ENCODE measurements at regions of chr6 and their contacts with region 1.

Region 1: DNA sequence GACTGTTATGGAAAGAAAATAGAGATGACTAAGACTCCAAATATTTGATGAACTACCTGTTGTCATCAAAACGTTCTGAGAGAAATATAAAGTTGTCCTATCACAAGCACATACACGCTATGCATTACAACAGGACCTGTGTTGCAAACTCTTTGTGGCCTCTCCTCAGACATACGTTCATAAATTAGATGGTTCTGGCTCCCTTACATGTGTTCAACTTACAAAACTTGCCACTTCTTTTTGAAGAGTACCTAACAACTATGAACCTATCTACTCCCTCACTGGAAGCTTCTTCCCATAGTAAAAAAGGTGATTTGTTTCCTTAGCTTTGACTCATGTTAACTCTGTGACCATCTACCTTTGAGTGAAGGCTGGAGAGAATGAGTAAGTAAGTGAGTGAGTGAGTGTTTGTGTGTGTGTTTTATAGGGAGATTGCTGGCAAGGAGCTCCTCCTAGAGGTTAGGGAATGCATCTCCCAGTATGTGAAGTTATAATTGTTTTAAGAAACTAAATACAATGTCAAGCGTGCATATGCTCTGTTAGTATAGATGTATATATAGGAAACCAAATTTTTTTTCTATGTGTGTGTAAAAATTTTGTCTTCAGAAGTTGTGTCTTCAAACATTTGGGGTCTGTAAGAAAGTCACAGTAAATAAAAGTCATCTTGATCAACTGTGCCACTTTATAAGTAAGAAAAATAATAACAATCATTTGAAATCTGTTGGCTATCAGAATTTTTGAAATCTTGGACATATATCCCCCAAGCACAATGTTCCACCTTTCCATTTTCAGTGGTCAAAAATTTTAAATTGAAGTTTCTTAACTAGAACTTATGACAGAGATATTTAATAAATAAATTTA is 1211.1 kb upstream of the GJE1 start:
- DNase-seq: peak; percentile 45
- H3K4me3 ChIP-seq: no peak overlapping the region
- H3K27ac ChIP-seq: no peak overlapping the region
- H3K4me1 ChIP-seq: no peaks in the 10 kb centered on the region
- CTCF ChIP-seq: peak; percentile 82

Region 2: GRCh38 chr6:139881728-139882211 is 1039.8 kb before region 1 on chr6:
- CTCF ChIA-PET with region 1: no interaction called
- POLR2A ChIA-PET with region 1: no interaction called
- intact Hi-C with region 1: loop called (anchors 10 kb)
- DNase-seq: peak; percentile 23
- H3K4me3 ChIP-seq: no peak overlapping the region
- H3K27ac ChIP-seq: no peak overlapping the region
- H3K4me1 ChIP-seq: no peaks in the 10 kb centered on the region
- CTCF ChIP-seq: peak; percentile 78

Region 3: GRCh38 chr6:141077355-141078333 is 156.0 kb after region 1 on chr6:
- CTCF ChIA-PET with region 1: no interaction called
- POLR2A ChIA-PET with region 1: no interaction called
- intact Hi-C with region 1: no loop called
- DNase-seq: peak; percentile 29
- H3K4me3 ChIP-seq: no peak overlapping the region
- H3K27ac ChIP-seq: no peak overlapping the region
- H3K4me1 ChIP-seq: no peaks in the 10 kb centered on the region
- CTCF ChIP-seq: peak; percentile 62